ENCODE measurements at regions of chr1 and their contacts with region 1.

Region 1: DNA sequence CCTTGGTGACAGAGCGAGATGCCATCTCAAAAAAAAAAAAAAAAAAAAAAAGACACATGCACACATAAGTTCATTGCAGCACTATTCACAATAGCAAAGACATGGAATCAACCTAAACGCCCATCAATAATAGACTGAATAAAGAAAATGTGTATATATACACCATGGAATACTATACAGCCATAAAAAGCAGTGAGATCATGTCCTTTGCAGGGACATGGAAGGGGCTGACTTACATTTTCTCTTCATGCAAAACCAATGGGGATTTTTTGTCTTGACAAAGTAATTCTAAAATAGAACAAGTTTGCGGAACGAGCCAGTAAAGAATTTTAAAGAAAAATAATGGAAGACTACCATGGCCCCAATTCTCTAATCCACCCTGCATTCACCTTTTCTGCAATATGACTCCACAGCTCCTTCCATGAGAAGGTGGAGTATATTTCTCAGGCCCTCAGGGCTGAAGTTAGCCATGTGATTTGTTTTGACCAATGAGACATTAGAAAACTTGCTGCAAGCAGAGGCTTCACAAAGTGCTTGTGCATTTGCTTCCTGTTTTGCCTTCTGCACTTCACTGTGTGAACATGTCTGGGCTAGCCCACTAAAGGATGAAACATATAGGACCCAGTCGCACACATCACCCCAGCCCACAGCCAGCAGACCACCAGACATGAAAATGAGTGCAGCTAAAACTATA is 78.8 kb upstream of the NR5A2 start:
- DNase-seq: no peak
- ATAC-seq: no peak
- H3K4me3 ChIP-seq: no peak overlapping the region
- H3K27ac ChIP-seq: no peak overlapping the region
- H3K4me1 ChIP-seq: no peaks in the 10 kb centered on the region
- H3K27me3 ChIP-seq: peaks cover 0 to 5% of the 10 kb centered on the region in 2 experiments; a peak in 2 of 4 replicates
- CTCF ChIP-seq: no peak
- EP300 ChIP-seq: no peak
- POLR2A ChIP-seq: no peak
- RAD21 ChIP-seq: no peak

Region 2: DNA sequence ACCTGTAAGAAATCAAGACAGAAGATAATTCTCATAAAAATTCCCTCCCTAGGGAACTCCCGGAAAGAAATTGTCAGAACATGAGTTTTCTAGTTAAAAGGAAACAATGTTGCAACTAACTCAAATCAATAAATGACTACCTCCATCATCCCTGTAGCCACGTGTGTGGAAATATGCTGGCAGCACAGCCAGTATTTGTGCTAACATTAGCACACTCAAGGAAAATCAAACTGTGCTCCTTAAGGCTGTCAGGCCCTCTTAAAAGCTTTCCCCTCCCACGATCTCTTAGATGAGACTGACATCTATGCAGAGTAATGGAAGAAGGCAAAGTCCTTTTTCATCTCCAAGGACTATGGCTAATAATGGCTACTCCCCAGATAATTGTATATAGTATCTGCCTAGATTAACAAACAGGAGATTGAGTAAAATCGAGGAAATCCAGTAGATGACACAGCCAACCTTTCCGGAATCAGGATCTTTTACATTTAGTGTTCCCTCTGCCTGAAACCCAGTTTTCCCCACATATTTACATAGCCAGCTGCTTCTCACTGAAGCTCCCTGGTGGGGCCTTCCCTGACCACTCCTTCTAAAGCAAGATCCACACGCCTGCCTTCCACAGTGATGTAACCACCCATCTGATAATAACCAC is 27.9 kb after region 1 on chr1:
- CTCF ChIA-PET with region 1: no interaction called
- POLR2A ChIA-PET with region 1: no interaction called
- RAD21 ChIA-PET with region 1: no interaction called
- SMC1A ChIA-PET with region 1: interaction called, 3 read pairs
- in situ Hi-C with region 1: no loop called
- intact Hi-C with region 1: loop called (anchors 5 kb)
- DNase-seq: no peak
- ATAC-seq: no peak; the same call in 1 of the 3 replicates
- H3K4me3 ChIP-seq: no peak overlapping the region
- H3K27ac ChIP-seq: no peak overlapping the region
- H3K4me1 ChIP-seq: peaks cover 6% of the 10 kb centered on the region
- H3K27me3 ChIP-seq: peaks cover 0 to 3% of the 10 kb centered on the region in 2 experiments; a peak in 2 of 4 replicates
- CTCF ChIP-seq: no peak
- EP300 ChIP-seq: no peak
- POLR2A ChIP-seq: no peak
- RAD21 ChIP-seq: no peak

Region 3: DNA sequence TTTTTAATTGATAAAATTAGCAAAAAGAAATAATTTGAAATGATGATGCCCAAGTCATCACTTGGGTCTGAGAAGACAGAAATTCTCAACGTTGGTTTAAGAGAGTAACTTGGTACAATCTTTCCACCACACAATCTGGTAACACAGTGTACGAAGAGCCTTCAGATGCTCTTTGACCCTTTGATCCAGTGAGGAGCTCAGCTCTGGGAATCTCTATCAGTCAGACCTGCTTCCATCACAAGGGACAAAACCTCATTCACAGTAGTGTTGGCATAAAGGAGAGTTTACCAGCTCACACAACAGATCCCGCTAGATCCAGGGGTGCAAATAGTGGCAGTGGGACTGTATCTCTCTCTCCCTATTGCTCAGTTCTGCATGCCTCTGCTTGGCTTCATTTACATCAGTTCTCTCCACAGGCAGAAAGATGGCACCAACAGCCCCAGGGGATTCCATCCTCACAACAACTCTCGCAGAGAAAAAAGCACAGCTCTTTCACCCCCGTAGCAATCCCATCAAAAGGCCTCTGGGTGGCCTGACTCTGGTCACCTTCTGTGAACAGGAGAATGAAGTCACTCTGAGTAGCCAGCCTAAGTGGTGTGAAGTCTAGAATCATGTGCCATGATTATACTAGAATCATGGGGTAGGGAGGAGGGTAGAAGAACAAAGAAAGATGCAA is 341.4 kb after region 1 on chr1:
- CTCF ChIA-PET with region 1: no interaction called
- POLR2A ChIA-PET with region 1: no interaction called
- RAD21 ChIA-PET with region 1: no interaction called
- SMC1A ChIA-PET with region 1: no interaction called
- in situ Hi-C with region 1: no loop called
- intact Hi-C with region 1: no loop called
- DNase-seq: no peak
- ATAC-seq: peak; percentile 79
- H3K4me3 ChIP-seq: no peak overlapping the region
- H3K27ac ChIP-seq: no peak overlapping the region
- H3K4me1 ChIP-seq: no peaks in the 10 kb centered on the region; the same call in 1 of the 2 replicates
- H3K27me3 ChIP-seq: no peaks in the 10 kb centered on the region
- CTCF ChIP-seq: no peak
- EP300 ChIP-seq: no peak
- POLR2A ChIP-seq: no peak
- RAD21 ChIP-seq: peak; percentile 20; the same call in 1 of the 2 replicates